A549 (cell line): ENCODE measurements at regions of chr10 and their contacts with region 1.

Region 1: DNA sequence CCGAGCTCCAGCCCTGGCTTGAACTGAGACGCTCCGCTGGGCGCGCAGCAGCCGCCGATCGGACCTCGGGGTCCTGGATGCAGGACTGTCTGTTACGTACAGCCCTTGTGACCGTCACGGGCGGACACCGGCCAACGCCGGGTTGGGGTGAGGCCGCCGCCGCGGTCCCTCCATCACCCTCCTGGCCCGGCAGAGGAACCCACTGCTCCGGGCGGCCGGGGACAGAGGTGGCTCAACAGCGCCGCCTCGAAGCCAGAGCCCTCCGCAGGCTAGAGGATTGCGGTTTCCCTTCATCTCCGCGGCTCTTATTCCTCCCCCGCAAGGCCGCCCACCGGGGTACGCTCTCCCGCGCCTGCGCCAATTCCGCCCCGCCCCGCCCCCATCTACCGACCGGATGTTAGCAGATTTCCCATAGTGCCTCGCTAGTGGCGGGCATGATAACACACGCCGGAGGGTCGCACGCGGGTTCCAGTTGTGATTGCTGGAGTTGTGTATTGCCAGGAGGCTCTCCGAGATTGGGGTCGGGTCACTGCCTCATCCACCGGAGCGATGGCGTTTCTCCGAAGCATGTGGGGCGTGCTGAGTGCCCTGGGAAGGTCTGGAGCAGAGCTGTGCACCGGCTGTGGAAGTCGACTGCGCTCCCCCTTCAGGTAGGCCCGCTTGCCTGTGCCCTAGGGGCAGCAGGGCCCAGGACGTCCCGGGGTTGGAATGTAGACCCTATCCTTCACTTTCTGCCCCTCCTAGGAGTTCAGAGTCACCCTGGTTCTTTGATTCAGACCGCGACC is at the start of gene TFAM:
- DNase-seq: peak; percentile 92 to 96
- ATAC-seq: peak; percentile 95 to 96
- H3K4me3 ChIP-seq: peak within 1 kb of the TSS; percentile 85
- H3K27ac ChIP-seq: peak within 1 kb of the TSS; percentile 86 to 98
- H3K4me1 ChIP-seq: peaks cover 16% of the 10 kb centered on the region; the same call in 2 of the 3 replicates
- CTCF ChIP-seq: peak; percentile 69
- EP300 ChIP-seq: no peak
- POLR2A ChIP-seq: peak; percentile 91
- RAD21 ChIP-seq: peak; percentile 62 to 78
- polyA plus RNA-seq, gene TFAM: 37.1 and 61.2 TPM in 2 replicates

Region 2: GRCh38 chr10:58268870-58269605 is 116.2 kb before region 1 on chr10 and contains the start of gene CISD1:
- CTCF ChIA-PET with region 1: interaction called, 3 read pairs
- POLR2A ChIA-PET with region 1: interaction called, 11 read pairs
- DNase-seq: peak; percentile 98 to 100
- ATAC-seq: peak; percentile 65 to 86
- H3K4me3 ChIP-seq: peak within 1 kb of the TSS; percentile 61
- H3K27ac ChIP-seq: peak within 1 kb of the TSS; percentile 83 to 94
- H3K4me1 ChIP-seq: peaks cover 31% of the 10 kb centered on the region; the same call in 2 of the 3 replicates
- CTCF ChIP-seq: no peak
- EP300 ChIP-seq: no peak
- POLR2A ChIP-seq: peak; percentile 81
- RAD21 ChIP-seq: no peak
- polyA plus RNA-seq, gene CISD1: 102 and 111 TPM in 2 replicates

Region 3: GRCh38 chr10:58299580-58299979 is 85.6 kb before region 1 on chr10:
- CTCF ChIA-PET with region 1: interaction called, 71 read pairs
- POLR2A ChIA-PET with region 1: interaction called, 3 read pairs
- DNase-seq: peak; percentile 62 to 68
- ATAC-seq: peak; percentile 94 to 97
- H3K4me3 ChIP-seq: no peak overlapping the region
- H3K27ac ChIP-seq: no peak overlapping the region
- H3K4me1 ChIP-seq: no peaks in the 10 kb centered on the region
- CTCF ChIP-seq: peak; percentile 88
- EP300 ChIP-seq: no peak
- POLR2A ChIP-seq: no peak
- RAD21 ChIP-seq: peak; percentile 89 to 90

Region 4: DNA sequence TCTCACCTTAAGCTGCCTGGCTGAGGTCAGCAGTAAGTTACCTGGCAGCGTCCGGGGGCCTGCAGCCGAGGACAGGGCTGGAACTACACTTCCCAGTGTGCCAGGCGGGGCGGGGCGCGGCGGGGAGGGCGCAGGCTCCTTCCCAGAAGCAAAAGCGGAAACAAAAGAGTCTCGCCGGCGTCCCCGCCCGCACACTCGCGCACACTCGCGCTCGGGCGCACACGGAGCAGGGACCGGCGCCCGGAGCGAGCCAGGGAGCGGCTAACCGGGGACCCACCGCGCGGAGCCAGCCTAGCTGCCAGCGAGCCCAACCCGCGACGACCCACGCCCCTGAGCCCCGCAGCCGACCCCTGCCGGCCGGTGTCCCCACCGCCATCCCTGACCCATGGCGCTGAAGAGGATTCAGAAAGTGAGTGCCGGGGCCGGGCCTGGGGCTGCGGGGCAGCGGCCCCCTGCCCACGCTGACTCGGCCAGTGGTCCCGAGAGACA is 50.3 kb before region 1 on chr10 and contains the start of gene UBE2D1:
- CTCF ChIA-PET with region 1: interaction called, 4 read pairs
- POLR2A ChIA-PET with region 1: interaction called, 13 read pairs
- DNase-seq: peak; percentile 77 to 80
- ATAC-seq: peak; percentile 94 to 98
- H3K4me3 ChIP-seq: peak within 1 kb of the TSS; percentile 99
- H3K27ac ChIP-seq: peak within 1 kb of the TSS; percentile 88 to 91
- H3K4me1 ChIP-seq: peaks cover 11% of the 10 kb centered on the region; the same call in 2 of the 3 replicates
- CTCF ChIP-seq: no peak
- EP300 ChIP-seq: no peak
- POLR2A ChIP-seq: peak; percentile 96
- RAD21 ChIP-seq: no peak
- polyA plus RNA-seq, gene UBE2D1: 35.1 and 40.5 TPM in 2 replicates